T-cell (primary cell): ENCODE measurements at regions of chr2 and their contacts with region 1.

Region 1: DNA sequence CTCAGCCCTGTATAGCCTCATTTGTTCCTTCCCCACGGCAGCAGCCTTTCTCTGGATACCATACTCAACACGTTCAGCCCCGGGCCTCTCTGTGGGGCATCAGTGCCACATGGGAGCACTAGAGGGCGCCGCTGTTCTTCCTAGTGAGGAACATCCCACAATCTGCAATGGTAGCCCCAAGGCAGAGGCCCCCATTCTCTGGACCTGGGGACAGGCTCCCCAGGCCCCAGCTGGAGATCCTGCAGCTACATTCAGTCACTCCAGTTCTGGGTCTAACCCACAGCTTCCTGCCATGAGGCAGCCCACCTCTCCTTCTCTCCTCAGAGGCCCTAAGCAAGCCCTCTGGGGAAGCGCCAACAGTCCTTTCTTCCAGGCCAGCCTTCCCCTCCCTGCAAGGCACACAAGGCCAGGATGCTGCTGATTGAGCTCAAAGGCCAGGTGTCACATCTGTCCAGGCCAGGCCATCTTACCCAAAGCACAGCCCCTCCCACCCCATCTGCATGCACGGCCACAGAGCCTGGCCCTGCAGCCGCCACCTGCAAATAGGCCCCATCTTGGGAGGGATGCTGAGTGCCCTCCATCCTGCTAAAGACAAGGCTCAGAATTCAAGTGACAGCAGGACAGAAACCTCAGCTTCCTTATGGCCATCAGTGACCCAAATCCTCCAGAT is 14.3 kb upstream of the SFXN5 start:
- DNase-seq: peak; percentile 55 to 86 (median 76)
- ATAC-seq: peak; percentile 83 to 97 (median 87)
- H3K4me3 ChIP-seq: no peak overlapping the region
- H3K4me3 Mint-ChIP-seq: no peak overlapping the region
- H3K27ac ChIP-seq: no peak overlapping the region
- H3K27ac Mint-ChIP-seq: no peak overlapping the region
- H3K4me1 ChIP-seq: peaks cover 0 to 7% of the 10 kb centered on the region in 2 experiments
- H3K4me1 Mint-ChIP-seq: peaks cover 0 to 14% (median 2%) of the 10 kb centered on the region in 3 donors
- H3K27me3 ChIP-seq: peaks cover 0 to 3% of the 10 kb centered on the region in 2 experiments
- H3K27me3 Mint-ChIP-seq: no peaks in the 10 kb centered on the region

Region 2: GRCh38 chr2:73163483-73164367 is 77.9 kb after region 1 on chr2:
- CTCF ChIA-PET with region 1: interaction called, 6 to 14 read pairs
- POLR2A ChIA-PET with region 1: no interaction called
- DNase-seq: peak in 32 of 35 experiments; percentile 24 to 77 (median 54)
- ATAC-seq: peak; percentile 75 to 91 (median 81)
- H3K4me3 ChIP-seq: no peak overlapping the region
- H3K4me3 Mint-ChIP-seq: no peak overlapping the region
- H3K27ac ChIP-seq: no peak overlapping the region
- H3K27ac Mint-ChIP-seq: no peak overlapping the region
- H3K4me1 ChIP-seq: no peaks in the 10 kb centered on the region
- H3K4me1 Mint-ChIP-seq: no peaks in the 10 kb centered on the region
- H3K27me3 ChIP-seq: peaks cover 0 to 12% of the 10 kb centered on the region in 2 experiments
- H3K27me3 Mint-ChIP-seq: peaks cover 6 to 30% of the 10 kb centered on the region in 2 donors